BJ (cell line): ENCODE measurements at regions of chr1 and their contacts with region 1.

Region 1: GRCh38 chr1:223123011-223123610 is 19.9 kb downstream of the TLR5 start:
- DNase-seq: no peak
- H3K4me3 ChIP-seq: no peak overlapping the region
- H3K27me3 ChIP-seq: no peaks in the 10 kb centered on the region
- CTCF ChIP-seq: no peak

Region 2: GRCh38 chr1:223102797-223103533 is 20.1 kb before region 1 on chr1:
- CTCF ChIA-PET with region 1: interaction called, 11 read pairs
- POLR2A ChIA-PET with region 1: no interaction called
- DNase-seq: no peak
- H3K4me3 ChIP-seq: no peak overlapping the region
- H3K27me3 ChIP-seq: no peaks in the 10 kb centered on the region
- CTCF ChIP-seq: no peak

Region 3: DNA sequence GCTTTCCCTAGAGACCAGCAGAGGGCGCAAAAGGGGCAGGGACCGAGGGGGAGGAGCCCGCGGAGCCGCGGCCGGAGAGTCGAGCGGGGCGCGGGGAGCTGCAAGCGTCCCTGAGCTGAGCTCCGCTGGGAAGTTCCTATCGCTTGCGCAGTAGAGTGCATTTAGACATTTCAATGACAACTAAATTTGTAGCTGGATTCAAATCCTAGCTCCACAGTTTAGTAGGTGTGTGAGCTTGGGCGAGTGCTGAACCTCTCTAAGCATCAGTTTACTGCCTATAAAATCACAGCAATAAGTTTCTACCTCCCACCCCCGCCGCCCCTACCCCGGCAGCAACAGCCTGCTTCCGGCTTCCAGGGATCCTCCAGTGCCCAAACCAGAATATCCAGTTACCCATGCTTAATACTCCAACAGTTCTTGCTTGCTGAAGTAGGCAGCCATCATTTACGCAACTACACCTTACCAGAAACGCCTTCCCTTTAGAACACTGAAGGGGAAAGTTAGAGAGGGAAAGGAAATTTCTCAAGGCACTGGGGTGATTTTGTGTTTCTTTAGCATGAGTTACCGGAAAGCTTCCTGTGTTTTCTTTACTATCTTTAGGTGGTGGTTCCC is 10.8 kb after region 1 on chr1:
- CTCF ChIA-PET with region 1: interaction called, 90 read pairs
- POLR2A ChIA-PET with region 1: no interaction called
- DNase-seq: no peak
- H3K4me3 ChIP-seq: peak overlapping the region; percentile 13; the same call in 1 of the 2 replicates
- H3K27me3 ChIP-seq: peaks cover 10% of the 10 kb centered on the region
- CTCF ChIP-seq: peak; percentile 98

Region 4: GRCh38 chr1:223142795-223143536 is 19.9 kb after region 1 on chr1 and contains the start of gene TLR5:
- CTCF ChIA-PET with region 1: interaction called, 90 read pairs
- POLR2A ChIA-PET with region 1: no interaction called
- DNase-seq: no peak
- H3K4me3 ChIP-seq: peak within 1 kb of the TSS; percentile 60
- H3K27me3 ChIP-seq: peaks cover 2% of the 10 kb centered on the region; the same call in 1 of the 2 replicates
- CTCF ChIP-seq: peak; percentile 84
- polyA plus RNA-seq, gene TLR5: 0.02 and 0.21 TPM in 2 replicates